ENCODE measurements at regions of chr18 and their contacts with region 1.

Region 1: DNA sequence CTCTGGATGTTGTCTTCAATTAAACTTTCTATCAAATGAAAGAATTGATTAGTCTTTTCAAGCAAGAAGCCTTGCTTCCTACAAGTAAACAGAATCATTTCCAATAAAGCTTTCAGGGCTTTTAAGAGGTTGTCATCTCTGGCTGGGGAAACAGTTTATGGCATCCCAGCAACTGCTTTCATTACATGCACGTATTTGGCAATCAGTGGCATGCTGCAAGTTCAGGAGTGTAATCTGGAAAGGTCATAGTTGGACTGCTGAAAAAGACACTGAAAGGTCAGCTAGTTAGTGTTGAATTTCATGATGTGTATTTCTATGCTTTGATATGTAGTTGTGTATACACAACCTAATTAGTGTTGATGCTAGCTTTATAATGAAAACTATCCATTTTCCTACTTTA is 332.9 kb downstream of the DSC3 start:
- DNase-seq: no peak
- ATAC-seq: no peak
- H3K4me3 ChIP-seq: no peak overlapping the region
- H3K27ac ChIP-seq: no peak overlapping the region
- H3K4me1 ChIP-seq: peaks cover 0 to 3% of the 10 kb centered on the region in 2 experiments; a peak in 1 of 5 replicates
- H3K27me3 ChIP-seq: no peaks in the 10 kb centered on the region
- CTCF ChIP-seq: no peak
- EP300 ChIP-seq: no peak
- POLR2A ChIP-seq: no peak
- RAD21 ChIP-seq: no peak

Region 2: GRCh38 chr18:30572214-30572613 is 137.4 kb before region 1 on chr18:
- CTCF ChIA-PET with region 1: no interaction called
- POLR2A ChIA-PET with region 1: no interaction called
- in situ Hi-C with region 1: no loop called
- intact Hi-C with region 1: no loop called
- DNase-seq: no peak
- ATAC-seq: no peak
- H3K4me3 ChIP-seq: no peak overlapping the region
- H3K27ac ChIP-seq: no peak overlapping the region
- H3K4me1 ChIP-seq: peaks cover 0 to 4% of the 10 kb centered on the region in 2 experiments; a peak in 2 of 5 replicates
- H3K27me3 ChIP-seq: no peaks in the 10 kb centered on the region
- CTCF ChIP-seq: no peak
- EP300 ChIP-seq: no peak
- POLR2A ChIP-seq: no peak
- RAD21 ChIP-seq: no peak

Region 3: GRCh38 chr18:30743033-30743432 is 33.4 kb after region 1 on chr18:
- CTCF ChIA-PET with region 1: no interaction called
- POLR2A ChIA-PET with region 1: no interaction called
- in situ Hi-C with region 1: no loop called
- intact Hi-C with region 1: loop called (anchors 5 kb)
- DNase-seq: no peak
- ATAC-seq: no peak
- H3K4me3 ChIP-seq: no peak overlapping the region
- H3K27ac ChIP-seq: no peak overlapping the region
- H3K4me1 ChIP-seq: no peaks in the 10 kb centered on the region
- H3K27me3 ChIP-seq: no peaks in the 10 kb centered on the region
- CTCF ChIP-seq: no peak
- EP300 ChIP-seq: no peak
- POLR2A ChIP-seq: no peak
- RAD21 ChIP-seq: no peak

Region 4: GRCh38 chr18:31102941-31103340 is 393.3 kb after region 1 on chr18:
- CTCF ChIA-PET with region 1: no interaction called
- POLR2A ChIA-PET with region 1: no interaction called
- in situ Hi-C with region 1: no loop called
- intact Hi-C with region 1: no loop called
- DNase-seq: peak in 1 of 4 experiments; percentile 22
- ATAC-seq: no peak
- H3K4me3 ChIP-seq: no peak overlapping the region
- H3K27ac ChIP-seq: no peak overlapping the region; the same call in 2 of the 3 replicates
- H3K4me1 ChIP-seq: peaks cover 14 to 28% of the 10 kb centered on the region in 2 experiments
- H3K27me3 ChIP-seq: no peaks in the 10 kb centered on the region
- CTCF ChIP-seq: no peak
- EP300 ChIP-seq: peak; percentile 6; the same call in 1 of the 2 replicates
- POLR2A ChIP-seq: no peak
- RAD21 ChIP-seq: no peak